ENCODE measurements at regions of chr1 and their contacts with region 1.

Region 1: GRCh38 chr1:74197657-74198552 is at the starts of genes FPGT and LRRIQ3:
- DNase-seq: peak; percentile 96
- H3K4me3 Mint-ChIP-seq: peak within 1 kb of the TSS; percentile 82
- H3K27ac Mint-ChIP-seq: peak within 1 kb of the TSS; percentile 86
- H3K4me1 Mint-ChIP-seq: peaks cover 18% of the 10 kb centered on the region
- H3K27me3 Mint-ChIP-seq: no peaks in the 10 kb centered on the region
- total RNA-seq, gene FPGT: 9.0 to 10.4 TPM
- total RNA-seq, gene LRRIQ3: 1.1 to 1.7 TPM

Region 2: GRCh38 chr1:73953186-73953585 is 244.7 kb before region 1 on chr1:
- CTCF ChIA-PET with region 1: no interaction called
- POLR2A ChIA-PET with region 1: no interaction called
- intact Hi-C with region 1: no loop called
- DNase-seq: no peak
- H3K4me3 Mint-ChIP-seq: no peak overlapping the region
- H3K27ac Mint-ChIP-seq: no peak overlapping the region
- H3K4me1 Mint-ChIP-seq: no peaks in the 10 kb centered on the region
- H3K27me3 Mint-ChIP-seq: no peaks in the 10 kb centered on the region

Region 3: DNA sequence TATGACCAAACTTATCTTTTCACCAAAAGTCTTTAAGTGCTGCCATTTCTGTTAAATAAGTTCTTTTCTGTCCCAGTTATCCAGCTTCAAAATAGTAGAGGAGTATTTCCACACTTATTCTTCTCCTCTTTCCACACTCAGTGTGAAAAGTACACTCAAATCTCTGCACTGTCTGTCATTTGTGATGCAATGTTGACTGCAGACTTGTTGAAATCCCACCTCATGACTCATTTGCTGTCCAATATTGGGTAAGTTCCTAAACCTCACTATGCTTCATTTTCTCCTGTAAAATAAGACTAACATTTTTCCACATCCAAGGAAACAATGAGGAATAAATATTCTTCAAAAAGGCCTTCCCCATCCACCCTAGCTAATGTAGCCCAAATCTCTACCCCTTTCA is 17.4 kb before region 1 on chr1:
- CTCF ChIA-PET with region 1: no interaction called
- POLR2A ChIA-PET with region 1: no interaction called
- intact Hi-C with region 1: no loop called
- DNase-seq: no peak
- H3K4me3 Mint-ChIP-seq: no peak overlapping the region
- H3K27ac Mint-ChIP-seq: no peak overlapping the region
- H3K4me1 Mint-ChIP-seq: no peaks in the 10 kb centered on the region
- H3K27me3 Mint-ChIP-seq: no peaks in the 10 kb centered on the region

Region 4: GRCh38 chr1:74468982-74469603 is 271.2 kb after region 1 on chr1:
- CTCF ChIA-PET with region 1: interaction called, 3 read pairs
- POLR2A ChIA-PET with region 1: no interaction called
- intact Hi-C with region 1: loop called (anchors 10 kb)
- DNase-seq: no peak
- H3K4me3 Mint-ChIP-seq: no peak overlapping the region
- H3K27ac Mint-ChIP-seq: no peak overlapping the region
- H3K4me1 Mint-ChIP-seq: no peaks in the 10 kb centered on the region
- H3K27me3 Mint-ChIP-seq: peaks cover 3% of the 10 kb centered on the region

Region 5: GRCh38 chr1:74629283-74629682 is 431.4 kb after region 1 on chr1:
- CTCF ChIA-PET with region 1: no interaction called
- POLR2A ChIA-PET with region 1: no interaction called
- intact Hi-C with region 1: no loop called
- DNase-seq: no peak
- H3K4me3 Mint-ChIP-seq: no peak overlapping the region
- H3K27ac Mint-ChIP-seq: no peak overlapping the region
- H3K4me1 Mint-ChIP-seq: no peaks in the 10 kb centered on the region
- H3K27me3 Mint-ChIP-seq: peaks cover 3% of the 10 kb centered on the region

Region 6: GRCh38 chr1:74681449-74681848 is 483.5 kb after region 1 on chr1:
- CTCF ChIA-PET with region 1: no interaction called
- POLR2A ChIA-PET with region 1: no interaction called
- intact Hi-C with region 1: loop called (anchors 5 kb)
- DNase-seq: no peak
- H3K4me3 Mint-ChIP-seq: no peak overlapping the region
- H3K27ac Mint-ChIP-seq: no peak overlapping the region
- H3K4me1 Mint-ChIP-seq: peaks cover 5% of the 10 kb centered on the region
- H3K27me3 Mint-ChIP-seq: peaks cover 15% of the 10 kb centered on the region

Region 7: DNA sequence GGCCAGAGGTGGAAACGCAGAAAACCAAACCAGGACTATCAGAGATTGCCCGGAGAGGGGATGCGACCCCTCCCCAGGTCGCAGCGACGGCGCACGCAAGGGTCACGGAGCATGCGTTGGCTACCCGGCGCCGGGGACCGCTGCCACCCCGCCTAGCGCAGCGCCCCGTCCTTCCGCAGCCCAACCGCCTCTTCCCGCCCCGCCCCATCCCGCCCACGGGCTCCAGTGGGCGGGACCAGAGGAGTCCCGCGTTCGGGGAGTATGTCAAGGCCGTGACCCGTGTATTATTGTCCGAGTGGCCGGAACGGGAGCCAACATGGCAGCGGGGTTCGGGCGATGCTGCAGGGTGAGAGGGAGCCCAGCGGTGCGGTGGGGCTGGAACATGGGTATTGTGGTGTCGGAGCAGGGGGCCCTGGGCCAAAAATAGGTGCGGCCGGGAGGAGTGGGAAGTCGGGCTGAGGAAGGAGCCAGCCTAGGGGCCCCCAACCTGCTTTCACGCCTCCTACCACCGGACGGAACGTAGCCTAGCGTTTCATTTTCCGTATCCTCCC is 1526.6 kb after region 1 on chr1 and contains the start of gene ACADM:
- CTCF ChIA-PET with region 1: no interaction called
- POLR2A ChIA-PET with region 1: no interaction called
- intact Hi-C with region 1: loop called (anchors 5 kb)
- DNase-seq: peak; percentile 91
- H3K4me3 Mint-ChIP-seq: peak within 1 kb of the TSS; percentile 100
- H3K27ac Mint-ChIP-seq: peak within 1 kb of the TSS; percentile 99
- H3K4me1 Mint-ChIP-seq: peaks cover 28% of the 10 kb centered on the region
- H3K27me3 Mint-ChIP-seq: no peaks in the 10 kb centered on the region
- total RNA-seq, gene ACADM: 60.3 to 60.9 TPM

Measured in activated CD4-positive, alpha-beta memory T cell treated with anti-CD3 and anti-CD28 coated beads for 36 hours (primary cell).